ENCODE measurements at regions of chr12 and their contacts with region 1.

Region 1: GRCh38 chr12:120640840-120641833 is 711 bp downstream of the CABP1 start:
- DNase-seq: peak in 1 of 10 donors; percentile 26
- H3K4me3 ChIP-seq: peak overlapping the region; percentile 45 to 76 (median 64)
- H3K27ac ChIP-seq: peak overlapping the region in 55 of 59 donors; percentile 23 to 95 (median 82)
- H3K27me3 ChIP-seq: peaks cover 0 to 37% (median 7%) of the 10 kb centered on the region in 45 donors
- CTCF ChIP-seq: no peak

Region 2: GRCh38 chr12:119338593-119339363 is 1302.4 kb before region 1 on chr12:
- intact Hi-C with region 1: no loop called
- DNase-seq: no peak
- H3K4me3 ChIP-seq: no peak overlapping the region
- H3K27ac ChIP-seq: peak overlapping the region in 1 of 59 donors; percentile 14
- H3K27me3 ChIP-seq: peaks cover 0 to 37% (median 4%) of the 10 kb centered on the region in 45 donors
- CTCF ChIP-seq: no peak

Region 3: DNA sequence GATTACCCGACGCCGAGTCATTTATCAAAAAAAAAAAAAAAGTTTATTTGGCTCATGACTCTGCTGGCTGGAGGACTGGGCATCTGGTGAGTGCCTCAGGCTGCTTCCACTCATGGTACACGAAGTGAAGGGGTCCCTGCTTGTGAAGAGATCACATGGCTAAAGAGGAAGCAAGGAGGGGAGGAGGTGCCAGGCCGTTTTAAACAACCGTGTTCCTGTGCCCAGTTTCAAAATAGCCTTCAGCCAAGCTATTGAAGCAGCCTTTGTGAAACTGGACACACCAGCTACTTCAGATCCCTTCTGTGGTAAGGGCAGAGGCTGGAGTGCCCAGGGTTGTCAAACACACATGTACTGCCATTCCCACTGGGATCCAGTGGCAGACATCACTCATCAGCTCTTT is 67.6 kb before region 1 on chr12:
- intact Hi-C with region 1: no loop called
- DNase-seq: no peak
- H3K4me3 ChIP-seq: no peak overlapping the region
- H3K27ac ChIP-seq: peak overlapping the region in 12 of 59 donors; percentile 0 to 46 (median 25)
- H3K27me3 ChIP-seq: no peaks in the 10 kb centered on the region
- CTCF ChIP-seq: no peak

Region 4: GRCh38 chr12:120588948-120589930 is 51.9 kb before region 1 on chr12:
- intact Hi-C with region 1: loop called in 1 of 2 experiments (anchors 2 kb)
- DNase-seq: peak; percentile 49 to 89 (median 80)
- H3K4me3 ChIP-seq: no peak overlapping the region
- H3K27ac ChIP-seq: peak overlapping the region in 58 of 59 donors; percentile 48 to 95 (median 83)
- H3K27me3 ChIP-seq: no peaks in the 10 kb centered on the region
- CTCF ChIP-seq: no peak

Region 5: GRCh38 chr12:120849765-120850164 is 208.6 kb after region 1 on chr12:
- intact Hi-C with region 1: loop called in 1 of 2 experiments (anchors 10 kb)
- DNase-seq: no peak
- H3K4me3 ChIP-seq: no peak overlapping the region
- H3K27ac ChIP-seq: peak overlapping the region in 31 of 59 donors; percentile 0 to 93 (median 40)
- H3K27me3 ChIP-seq: no peaks in the 10 kb centered on the region
- CTCF ChIP-seq: no peak